ENCODE measurements at regions of chr15 and their contacts with region 1.

Region 1: GRCh38 chr15:41116116-41116871 is at the start of gene INO80:
- DNase-seq: peak; percentile 99
- ATAC-seq: peak; percentile 85
- H3K4me3 Mint-ChIP-seq: peak within 1 kb of the TSS; percentile 80
- H3K27ac Mint-ChIP-seq: peak within 1 kb of the TSS; percentile 98
- H3K4me1 Mint-ChIP-seq: peaks cover 24% of the 10 kb centered on the region
- H3K27me3 Mint-ChIP-seq: no peaks in the 10 kb centered on the region
- total RNA-seq, gene INO80: 22.2 to 25.1 TPM

Region 2: DNA sequence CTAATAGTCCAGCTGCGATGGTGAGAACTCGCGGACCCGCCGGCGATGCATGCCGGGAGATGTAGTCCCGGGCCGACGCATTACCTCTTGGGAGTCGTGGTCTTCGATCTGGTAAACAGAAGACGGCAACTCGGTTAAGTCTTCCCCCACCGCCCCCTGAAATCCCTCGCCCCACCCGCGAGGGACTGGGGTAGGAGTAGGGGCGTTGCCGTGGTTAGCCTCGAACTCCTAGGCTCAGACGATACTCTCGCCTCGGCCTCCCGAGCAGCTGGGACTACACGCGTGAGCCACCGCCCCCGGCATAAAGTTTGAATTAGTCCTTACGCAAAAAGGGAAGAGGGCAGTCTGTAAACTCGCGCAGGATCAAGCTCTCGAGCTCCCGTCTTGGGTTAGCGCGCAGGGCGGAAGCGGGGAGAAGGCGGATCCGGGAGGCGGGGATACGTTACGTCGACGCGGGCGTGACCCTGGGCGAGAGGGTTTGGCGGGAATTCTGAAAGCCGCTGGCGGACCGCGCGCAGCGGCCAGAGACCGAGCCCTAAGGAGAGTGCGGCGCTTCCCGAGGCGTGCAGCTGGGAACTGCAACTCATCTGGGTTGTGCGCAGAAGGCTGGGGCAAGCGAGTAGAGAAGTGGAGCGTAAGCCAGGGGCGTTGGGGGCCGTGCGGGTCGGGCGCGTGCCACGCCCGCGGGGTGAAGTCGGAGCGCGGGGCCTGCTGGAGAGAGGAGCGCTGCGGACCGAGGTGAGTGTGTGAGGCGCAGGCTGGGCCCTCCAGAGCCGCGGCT is 421.4 kb before region 1 on chr15 and contains the start of gene RAD51:
- CTCF ChIA-PET with region 1: no interaction called
- POLR2A ChIA-PET with region 1: interaction called, 8 read pairs
- intact Hi-C with region 1: loop called in 1 of 2 experiments (anchors 1 kb)
- DNase-seq: peak; percentile 96
- ATAC-seq: peak; percentile 93
- H3K4me3 Mint-ChIP-seq: peak within 1 kb of the TSS; percentile 95
- H3K27ac Mint-ChIP-seq: peak within 1 kb of the TSS; percentile 98
- H3K4me1 Mint-ChIP-seq: peaks cover 20% of the 10 kb centered on the region
- H3K27me3 Mint-ChIP-seq: no peaks in the 10 kb centered on the region
- total RNA-seq, gene RAD51: 73.5 to 75.3 TPM

Region 3: GRCh38 chr15:40893733-40894688 is 222.3 kb before region 1 on chr15 and contains the start of gene VPS18:
- CTCF ChIA-PET with region 1: interaction called, 4 read pairs
- POLR2A ChIA-PET with region 1: no interaction called
- intact Hi-C with region 1: loop called in 1 of 2 experiments (anchors 1 kb)
- DNase-seq: peak; percentile 100
- ATAC-seq: peak; percentile 99
- H3K4me3 Mint-ChIP-seq: peak within 1 kb of the TSS; percentile 88
- H3K27ac Mint-ChIP-seq: peak within 1 kb of the TSS; percentile 86
- H3K4me1 Mint-ChIP-seq: peaks cover 29% of the 10 kb centered on the region
- H3K27me3 Mint-ChIP-seq: no peaks in the 10 kb centered on the region
- total RNA-seq, gene VPS18: 6.2 TPM

Region 4: DNA sequence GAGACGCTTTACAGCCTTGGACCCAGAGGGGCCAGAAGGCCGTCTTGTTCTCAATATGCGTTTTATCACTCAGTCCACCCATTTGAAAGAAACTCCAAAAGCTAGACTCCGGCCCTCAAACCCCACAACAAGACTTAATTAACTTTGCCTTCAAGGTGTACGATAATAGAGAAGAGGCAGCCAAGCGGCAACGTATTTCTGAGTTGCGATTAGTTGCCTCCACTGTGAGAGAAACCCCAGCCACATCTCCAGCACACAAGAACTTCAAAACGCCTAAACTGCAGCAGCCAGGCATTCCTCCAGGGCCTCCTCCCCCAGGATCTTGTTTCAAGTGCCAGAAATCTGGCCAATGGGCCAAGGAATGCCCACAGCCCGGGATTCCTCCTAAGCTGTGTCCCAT is 17.2 kb after region 1 on chr15:
- CTCF ChIA-PET with region 1: no interaction called
- POLR2A ChIA-PET with region 1: no interaction called
- intact Hi-C with region 1: no loop called
- DNase-seq: no peak
- ATAC-seq: no peak
- H3K4me3 Mint-ChIP-seq: no peak overlapping the region
- H3K27ac Mint-ChIP-seq: no peak overlapping the region
- H3K4me1 Mint-ChIP-seq: no peaks in the 10 kb centered on the region
- H3K27me3 Mint-ChIP-seq: peaks cover 4% of the 10 kb centered on the region

Region 5: DNA sequence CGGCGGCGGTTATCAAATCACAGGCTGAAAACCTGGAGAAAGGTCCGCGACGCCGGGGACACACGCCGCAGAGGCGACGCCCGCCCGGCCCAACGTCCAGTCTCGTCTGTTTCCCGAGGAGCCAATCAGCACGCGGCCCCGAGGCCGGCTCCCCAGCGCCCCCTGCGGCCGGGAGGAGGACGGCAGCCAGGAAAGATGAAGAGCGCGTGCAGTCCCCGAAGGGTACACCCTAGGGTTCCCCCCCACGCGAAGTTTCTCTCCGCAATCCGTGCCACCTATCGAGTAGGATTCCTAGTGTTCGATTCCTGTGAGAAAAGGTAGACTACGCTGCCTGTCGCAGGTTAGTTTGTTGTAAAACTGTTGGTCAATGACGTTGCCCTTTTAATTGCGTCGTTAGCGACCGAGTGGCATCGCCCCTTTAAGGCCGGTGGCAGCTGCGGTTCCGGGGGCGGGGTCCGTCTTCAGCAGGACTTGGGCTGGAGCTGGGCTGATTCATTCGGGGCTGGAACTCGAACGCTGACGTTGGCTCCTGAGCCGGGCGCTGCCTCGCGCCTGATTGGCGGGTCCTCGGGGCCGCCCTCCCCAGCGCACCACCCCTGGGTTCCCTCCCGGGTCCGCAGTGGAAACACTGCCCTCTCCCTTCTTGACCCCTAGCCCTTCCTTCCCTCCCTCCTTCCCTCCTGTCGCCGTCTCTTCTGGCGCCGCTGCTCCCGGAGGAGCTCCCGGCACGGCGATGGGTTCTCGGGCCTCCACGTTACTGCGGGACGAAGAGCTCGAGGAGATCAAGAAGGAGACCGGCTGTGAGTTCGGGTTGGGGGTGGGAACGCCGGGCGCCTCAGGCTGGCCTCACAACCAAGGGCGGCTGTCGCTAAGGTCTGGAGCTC is 114.6 kb after region 1 on chr15 and contains the starts of genes CHP1 and EXD1:
- CTCF ChIA-PET with region 1: interaction called, 8 read pairs
- POLR2A ChIA-PET with region 1: interaction called, 5 read pairs
- intact Hi-C with region 1: loop called (anchors 1 kb)
- DNase-seq: peak; percentile 99
- ATAC-seq: peak; percentile 99
- H3K4me3 Mint-ChIP-seq: peak within 1 kb of the TSS; percentile 87
- H3K27ac Mint-ChIP-seq: peak within 1 kb of the TSS; percentile 86
- H3K4me1 Mint-ChIP-seq: peaks cover 29% of the 10 kb centered on the region
- H3K27me3 Mint-ChIP-seq: no peaks in the 10 kb centered on the region
- total RNA-seq, gene CHP1: 32.7 to 34.5 TPM
- total RNA-seq, gene EXD1: not detected

Region 6: DNA sequence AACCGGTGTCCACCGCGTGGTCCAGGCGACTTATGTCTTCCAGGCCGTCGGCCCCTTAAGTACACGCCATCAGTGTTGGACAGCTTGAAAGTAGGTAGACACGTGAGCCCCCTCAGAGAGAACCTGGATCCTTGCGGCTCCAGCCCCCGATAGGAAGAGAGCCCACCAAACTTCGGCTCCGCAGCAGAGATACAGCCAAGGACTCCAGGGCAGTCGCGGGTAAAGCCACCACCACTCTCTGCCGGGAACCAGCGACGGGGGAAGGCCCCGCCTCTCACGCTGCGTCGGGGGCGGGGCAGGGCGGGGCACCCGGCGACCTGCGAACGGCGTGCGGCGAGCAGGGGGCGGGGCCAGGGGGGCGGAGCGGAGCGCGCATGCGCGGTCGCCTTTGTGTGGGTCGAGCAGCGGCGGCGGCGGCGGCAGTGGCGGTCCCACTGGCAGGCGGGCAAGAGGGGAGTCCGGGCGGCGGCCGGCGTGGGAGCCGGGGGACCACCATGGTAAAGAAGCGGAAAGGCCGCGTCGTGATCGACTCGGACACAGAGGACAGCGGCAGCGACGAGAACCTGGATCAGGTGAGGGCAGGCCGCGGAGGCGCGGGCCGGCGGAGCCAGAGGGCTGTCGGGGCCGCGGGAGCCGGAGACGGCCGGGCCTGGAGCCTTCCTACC is 300.6 kb after region 1 on chr15 and contains the start of gene RTF1:
- CTCF ChIA-PET with region 1: no interaction called
- POLR2A ChIA-PET with region 1: no interaction called
- intact Hi-C with region 1: loop called in 1 of 2 experiments (anchors 5 kb)
- DNase-seq: peak; percentile 98
- ATAC-seq: peak; percentile 94
- H3K4me3 Mint-ChIP-seq: peak within 1 kb of the TSS; percentile 88
- H3K27ac Mint-ChIP-seq: peak within 1 kb of the TSS; percentile 92
- H3K4me1 Mint-ChIP-seq: peaks cover 38% of the 10 kb centered on the region
- H3K27me3 Mint-ChIP-seq: no peaks in the 10 kb centered on the region
- total RNA-seq, gene RTF1: 29.4 to 32.3 TPM

Region 7: GRCh38 chr15:41660235-41661077 is 544.2 kb after region 1 on chr15 and contains the start of gene MGA:
- CTCF ChIA-PET with region 1: no interaction called
- POLR2A ChIA-PET with region 1: no interaction called
- intact Hi-C with region 1: loop called in 1 of 2 experiments (anchors 2 kb)
- DNase-seq: peak; percentile 94
- ATAC-seq: peak; percentile 89
- H3K4me3 Mint-ChIP-seq: peak within 1 kb of the TSS; percentile 92
- H3K27ac Mint-ChIP-seq: peak within 1 kb of the TSS; percentile 95
- H3K4me1 Mint-ChIP-seq: peaks cover 42% of the 10 kb centered on the region
- H3K27me3 Mint-ChIP-seq: peaks cover 7% of the 10 kb centered on the region
- total RNA-seq, gene MGA: 33.7 to 39.3 TPM

Region 8: GRCh38 chr15:42575188-42576039 is 1459.1 kb after region 1 on chr15 and contains the start of gene STARD9:
- CTCF ChIA-PET with region 1: no interaction called
- POLR2A ChIA-PET with region 1: no interaction called
- intact Hi-C with region 1: loop called in 1 of 2 experiments (anchors 5 kb)
- DNase-seq: peak; percentile 97
- ATAC-seq: peak; percentile 92
- H3K4me3 Mint-ChIP-seq: peak within 1 kb of the TSS; percentile 86
- H3K27ac Mint-ChIP-seq: peak within 1 kb of the TSS; percentile 76
- H3K4me1 Mint-ChIP-seq: peaks cover 18% of the 10 kb centered on the region
- H3K27me3 Mint-ChIP-seq: peaks cover 21% of the 10 kb centered on the region
- total RNA-seq, gene STARD9: 4.0 to 4.1 TPM